ENCODE measurements at regions of chr16 and their contacts with region 1.

Region 1: DNA sequence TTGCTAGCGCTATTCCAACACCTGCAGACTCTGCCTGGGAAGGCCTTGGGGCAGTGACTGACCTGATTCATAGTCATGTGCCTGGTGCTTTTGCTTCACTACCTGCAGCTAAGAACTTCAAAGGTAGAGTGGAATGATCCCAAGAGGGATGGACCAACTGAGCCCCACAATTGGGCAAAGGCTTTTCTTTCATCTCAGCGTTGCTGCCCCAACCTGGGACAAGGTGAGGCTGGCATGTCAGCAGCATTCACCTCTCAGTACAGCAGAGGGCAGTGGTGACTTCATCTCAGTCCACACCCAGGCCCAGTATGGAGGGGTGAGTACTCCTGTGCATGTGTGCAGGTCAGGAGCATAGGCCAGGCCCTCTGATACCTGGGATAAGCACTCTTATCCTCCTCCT is 149.6 kb upstream of the GNAO1 start:
- DNase-seq: peak; percentile 7
- ATAC-seq: peak; percentile 98
- H3K4me3 ChIP-seq: no peak overlapping the region
- H3K27ac ChIP-seq: no peak overlapping the region
- H3K4me1 ChIP-seq: no peaks in the 10 kb centered on the region
- H3K27me3 ChIP-seq: no peaks in the 10 kb centered on the region
- CTCF ChIP-seq: peak; percentile 41 to 53 (median 52); a peak in 5 of 6 replicates
- POLR2A ChIP-seq: no peak
- RAD21 ChIP-seq: peak; percentile 58

Region 2: DNA sequence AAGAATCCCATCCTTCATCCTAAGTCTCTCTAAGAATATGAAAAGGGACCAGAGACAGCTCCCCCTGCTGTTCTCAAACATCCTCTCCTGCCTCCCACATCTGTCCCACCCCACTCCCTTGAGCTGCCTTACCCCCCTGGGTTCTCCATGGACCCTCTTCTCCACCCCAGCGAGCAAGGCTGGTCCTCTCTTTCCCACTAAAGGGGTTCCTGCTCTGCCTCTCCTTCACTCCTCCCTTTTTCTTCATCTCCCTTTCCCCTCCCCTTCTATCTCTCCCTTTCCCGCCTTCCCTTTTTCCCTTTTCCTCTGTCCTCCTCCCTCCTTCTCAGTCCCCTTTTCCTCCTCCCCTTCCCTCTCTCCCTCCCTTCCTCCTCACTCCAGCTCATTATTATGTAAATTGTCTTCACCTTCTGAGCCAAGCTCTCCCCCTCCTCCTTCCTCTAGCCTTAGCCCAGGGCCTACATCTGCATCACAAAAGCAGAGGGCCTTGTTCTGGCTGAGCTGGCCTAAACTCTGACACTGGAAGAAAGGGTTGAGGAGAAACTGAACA is 239.6 kb after region 1 on chr16:
- CTCF ChIA-PET with region 1: interaction called, 4 read pairs
- POLR2A ChIA-PET with region 1: no interaction called
- RAD21 ChIA-PET with region 1: no interaction called
- intact Hi-C with region 1: loop called (anchors 10 kb)
- DNase-seq: no peak
- ATAC-seq: peak; percentile 72
- H3K4me3 ChIP-seq: no peak overlapping the region
- H3K27ac ChIP-seq: no peak overlapping the region
- H3K4me1 ChIP-seq: no peaks in the 10 kb centered on the region
- H3K27me3 ChIP-seq: peaks cover 5% of the 10 kb centered on the region; the same call in 1 of the 2 replicates
- CTCF ChIP-seq: peak; percentile 6 to 59 (median 55); a peak in 4 of 6 replicates
- POLR2A ChIP-seq: no peak
- RAD21 ChIP-seq: peak; percentile 19

Measured in HCT116 (cell line).